Transverse colon (tissue), 4 donors: ENCODE measurements at regions of chr1 and their contacts with region 1.

Region 1: DNA sequence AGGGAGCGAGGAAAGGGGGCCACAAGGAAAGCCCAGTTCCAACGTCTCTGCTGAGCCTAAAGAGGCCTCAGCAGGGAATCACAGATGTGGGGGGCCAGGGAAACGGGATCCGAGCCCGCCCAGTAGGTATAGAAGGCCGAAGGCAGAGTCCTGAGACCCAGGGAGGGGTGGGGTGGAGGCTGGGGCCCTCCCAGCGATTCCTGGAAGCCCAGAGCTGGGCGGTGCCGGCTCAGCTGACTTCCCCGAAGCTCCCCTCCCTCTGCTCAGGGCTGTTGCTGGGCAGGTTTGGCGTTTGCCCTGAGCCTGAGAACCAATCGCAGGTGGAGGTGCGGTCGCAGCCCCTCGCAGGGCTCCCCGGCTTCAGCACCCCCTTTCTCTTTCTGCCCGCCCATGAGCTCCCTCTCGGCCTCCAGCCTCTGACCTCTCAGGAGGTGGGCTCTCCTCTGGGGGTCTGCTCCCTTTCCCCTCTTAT is 12.8 kb downstream of the ADAMTSL4 start:
- DNase-seq: peak; percentile 96
- H3K4me3 ChIP-seq: peak overlapping the region; percentile 36 to 61 (median 40)
- H3K27ac ChIP-seq: peak overlapping the region; percentile 98 to 99 (median 98)
- H3K4me1 ChIP-seq: peaks cover 56 to 78% (median 74%) of the 10 kb centered on the region in 4 donors
- H3K27me3 ChIP-seq: no peaks in the 10 kb centered on the region
- CTCF ChIP-seq: no peak
- EP300 ChIP-seq: peak; percentile 95
- POLR2A ChIP-seq: no peak

Region 2: GRCh38 chr1:150346316-150346715 is 215.7 kb before region 1 on chr1:
- in situ Hi-C with region 1: no loop called
- intact Hi-C with region 1: no loop called
- DNase-seq: no peak
- H3K4me3 ChIP-seq: no peak overlapping the region
- H3K27ac ChIP-seq: no peak overlapping the region
- H3K4me1 ChIP-seq: no peaks in the 10 kb centered on the region
- H3K27me3 ChIP-seq: no peaks in the 10 kb centered on the region
- CTCF ChIP-seq: no peak
- EP300 ChIP-seq: no peak
- POLR2A ChIP-seq: no peak

Region 3: GRCh38 chr1:150372580-150372979 is 189.4 kb before region 1 on chr1:
- in situ Hi-C with region 1: no loop called
- intact Hi-C with region 1: no loop called
- DNase-seq: no peak
- H3K4me3 ChIP-seq: no peak overlapping the region
- H3K27ac ChIP-seq: no peak overlapping the region
- H3K4me1 ChIP-seq: peaks cover under 1 to 49% (median 13%) of the 10 kb centered on the region in 4 donors
- H3K27me3 ChIP-seq: no peaks in the 10 kb centered on the region
- CTCF ChIP-seq: no peak
- EP300 ChIP-seq: no peak
- POLR2A ChIP-seq: no peak

Region 4: DNA sequence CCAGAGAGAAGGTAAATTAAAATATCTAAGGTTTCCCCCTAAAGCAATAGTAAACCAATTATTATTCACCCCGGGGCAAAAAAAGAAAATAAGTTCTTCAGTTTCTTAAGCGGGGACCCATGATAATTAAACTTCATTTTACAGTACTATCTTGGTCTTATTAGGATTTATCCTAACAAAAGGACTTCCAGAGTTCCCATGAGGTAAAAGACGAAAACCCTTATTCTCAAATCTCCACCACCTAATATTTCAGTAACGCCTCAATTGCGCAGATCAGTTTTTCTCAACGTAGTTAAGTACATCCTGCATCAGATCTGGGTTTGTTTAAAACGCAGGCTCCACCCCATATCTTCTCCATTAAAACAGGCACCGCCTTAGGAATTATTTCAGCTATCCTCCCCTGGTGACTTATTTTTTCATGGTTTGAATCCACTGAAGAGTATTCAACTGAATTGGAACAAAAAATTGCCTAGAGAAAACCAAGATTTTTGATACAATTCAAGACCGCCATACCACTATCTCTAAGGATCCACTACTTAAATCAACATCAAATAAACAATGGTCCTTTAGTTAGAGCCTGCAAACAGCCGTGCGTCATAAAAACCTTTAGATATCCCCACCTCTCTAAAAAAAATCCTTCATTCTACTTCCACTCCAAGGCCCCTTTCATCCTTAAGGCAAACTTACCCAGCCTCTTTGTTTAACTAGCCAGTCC is 15.7 kb after region 1 on chr1:
- in situ Hi-C with region 1: no loop called
- intact Hi-C with region 1: loop called (anchors 2 kb)
- DNase-seq: no peak
- H3K4me3 ChIP-seq: peak overlapping the region; percentile 85 to 97 (median 91)
- H3K27ac ChIP-seq: peak overlapping the region; percentile 98 to 99 (median 98)
- H3K4me1 ChIP-seq: peaks cover 18 to 55% (median 38%) of the 10 kb centered on the region in 4 donors
- H3K27me3 ChIP-seq: no peaks in the 10 kb centered on the region
- CTCF ChIP-seq: no peak
- EP300 ChIP-seq: no peak
- POLR2A ChIP-seq: peak; percentile 8

Region 5: GRCh38 chr1:150613061-150613920 is 51.3 kb after region 1 on chr1:
- in situ Hi-C with region 1: loop called in 3 of 4 experiments (anchors 5 to 10 kb)
- intact Hi-C with region 1: loop called (anchors 5 kb)
- DNase-seq: peak; percentile 69
- H3K4me3 ChIP-seq: peak overlapping the region in 1 of 4 donors; percentile 0
- H3K27ac ChIP-seq: peak overlapping the region; percentile 88 to 94 (median 90)
- H3K4me1 ChIP-seq: peaks cover 39 to 71% (median 53%) of the 10 kb centered on the region in 4 donors
- H3K27me3 ChIP-seq: no peaks in the 10 kb centered on the region
- CTCF ChIP-seq: no peak
- EP300 ChIP-seq: peak; percentile 88
- POLR2A ChIP-seq: no peak

Region 6: DNA sequence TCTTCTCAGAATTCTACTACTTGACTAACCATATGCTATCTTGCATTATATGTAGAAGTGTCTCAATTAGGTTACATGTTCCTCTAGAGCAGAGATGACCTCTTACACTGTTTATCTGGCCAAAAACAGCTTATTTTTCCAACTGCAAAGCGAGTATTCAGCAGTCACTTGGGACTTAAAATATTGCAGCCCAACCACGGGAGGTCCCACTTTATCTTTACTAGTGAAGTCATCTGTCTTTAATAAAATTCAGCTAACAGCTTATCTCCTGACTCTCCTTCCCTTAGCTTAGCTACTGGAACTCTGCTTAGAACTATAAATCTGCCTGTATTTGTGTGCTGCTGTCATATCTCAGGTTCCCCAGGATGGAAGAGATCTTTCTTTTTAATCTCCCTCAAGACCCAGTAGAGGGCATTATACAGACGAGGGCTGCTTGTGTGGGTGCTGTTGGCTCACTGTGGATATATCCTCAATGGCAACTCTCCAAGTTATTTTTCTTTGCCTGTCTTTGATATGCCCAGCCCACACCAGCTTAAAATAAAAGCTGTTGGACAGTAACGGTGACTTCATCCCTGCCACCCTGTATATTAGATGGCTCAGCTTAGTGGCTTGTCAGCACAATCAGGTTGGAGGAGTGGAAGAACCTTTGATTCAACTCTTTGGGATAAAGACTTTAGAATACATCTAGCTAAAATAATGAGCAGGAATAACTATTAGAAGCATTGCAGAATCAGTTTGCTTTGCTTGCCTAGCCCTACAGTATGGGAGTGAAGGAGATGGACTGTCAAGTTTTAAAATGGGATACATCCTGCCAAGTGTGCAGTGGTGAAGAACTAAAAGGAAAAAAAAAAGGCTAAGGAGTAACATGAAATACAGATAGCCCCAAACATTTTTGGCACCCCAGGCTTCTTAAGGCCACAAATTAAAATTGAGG is 57.8 kb after region 1 on chr1:
- in situ Hi-C with region 1: loop called in 2 of 4 experiments (anchors 5 to 10 kb)
- intact Hi-C with region 1: loop called (anchors 5 kb)
- DNase-seq: no peak
- H3K4me3 ChIP-seq: no peak overlapping the region
- H3K27ac ChIP-seq: peak overlapping the region; percentile 73 to 80 (median 75)
- H3K4me1 ChIP-seq: peaks cover 18 to 51% (median 30%) of the 10 kb centered on the region in 4 donors
- H3K27me3 ChIP-seq: no peaks in the 10 kb centered on the region
- CTCF ChIP-seq: peak in 3 of 5 experiments; percentile 17 to 47 (median 27)
- EP300 ChIP-seq: no peak
- POLR2A ChIP-seq: no peak

Region 7: DNA sequence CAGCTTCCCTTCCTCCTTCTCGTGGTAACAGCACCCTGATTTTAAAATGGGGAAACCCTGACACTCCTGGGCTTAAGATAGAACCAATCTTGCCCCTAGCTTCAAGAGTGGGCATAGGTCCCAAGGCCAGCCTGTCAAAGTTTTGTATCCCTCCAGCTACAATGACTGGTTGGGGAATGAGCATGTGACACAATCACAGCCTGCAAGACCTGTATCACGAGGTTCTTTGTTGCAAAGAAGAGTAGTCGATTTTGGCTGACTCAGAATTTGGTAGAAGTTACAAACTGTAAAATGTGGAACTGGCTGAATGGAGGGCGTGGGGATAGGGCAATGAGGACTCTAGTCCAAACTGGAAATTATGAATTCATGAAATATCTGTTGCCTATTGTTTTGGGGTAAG is 227.4 kb after region 1 on chr1:
- in situ Hi-C with region 1: no loop called
- intact Hi-C with region 1: no loop called
- DNase-seq: no peak
- H3K4me3 ChIP-seq: no peak overlapping the region
- H3K27ac ChIP-seq: no peak overlapping the region
- H3K4me1 ChIP-seq: no peaks in the 10 kb centered on the region
- H3K27me3 ChIP-seq: no peaks in the 10 kb centered on the region
- CTCF ChIP-seq: no peak
- EP300 ChIP-seq: no peak
- POLR2A ChIP-seq: no peak